ENCODE measurements at regions of chr2 and their contacts with region 1.

Region 1: DNA sequence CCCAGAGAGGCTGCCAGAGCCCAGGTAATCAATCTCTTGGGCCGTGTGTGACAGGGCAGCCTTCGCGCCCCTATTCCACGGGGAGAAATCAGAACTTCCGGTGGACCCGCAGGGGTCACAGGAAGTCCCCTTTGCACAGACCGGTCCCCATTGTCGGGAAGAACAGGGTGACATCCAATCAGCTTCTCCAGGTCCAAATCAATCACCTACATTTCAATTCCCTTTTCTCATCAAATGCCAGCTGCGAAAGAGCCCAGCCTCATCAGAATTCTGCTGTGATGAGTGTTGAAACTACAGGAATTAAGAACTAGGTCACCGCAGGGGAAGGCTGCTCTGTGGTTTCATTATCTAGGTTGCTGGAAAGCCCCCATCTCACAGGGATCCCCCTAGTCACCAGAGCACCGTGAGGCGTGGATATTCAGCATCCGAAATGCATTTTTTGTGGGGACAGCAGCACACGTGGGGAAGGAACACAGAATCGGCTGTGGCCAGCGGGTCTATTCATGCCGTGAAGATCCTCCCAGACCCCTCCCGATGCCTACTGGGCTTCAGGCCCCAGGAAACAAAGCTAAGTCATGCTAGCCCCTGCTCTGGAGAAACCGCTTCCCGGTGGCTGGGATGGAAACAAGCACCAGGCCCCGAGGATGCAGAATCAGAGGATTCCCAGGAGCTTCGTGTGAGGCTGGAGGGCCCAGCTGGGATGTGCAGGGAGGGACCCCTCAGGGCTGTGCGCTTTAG is 193.7 kb upstream of the ID2 start:
- DNase-seq: peak; percentile 84
- H3K4me3 Mint-ChIP-seq: peak overlapping the region; percentile 68
- H3K27ac Mint-ChIP-seq: peak overlapping the region; percentile 80
- H3K4me1 Mint-ChIP-seq: peaks cover 48% of the 10 kb centered on the region
- H3K27me3 Mint-ChIP-seq: no peaks in the 10 kb centered on the region

Region 2: DNA sequence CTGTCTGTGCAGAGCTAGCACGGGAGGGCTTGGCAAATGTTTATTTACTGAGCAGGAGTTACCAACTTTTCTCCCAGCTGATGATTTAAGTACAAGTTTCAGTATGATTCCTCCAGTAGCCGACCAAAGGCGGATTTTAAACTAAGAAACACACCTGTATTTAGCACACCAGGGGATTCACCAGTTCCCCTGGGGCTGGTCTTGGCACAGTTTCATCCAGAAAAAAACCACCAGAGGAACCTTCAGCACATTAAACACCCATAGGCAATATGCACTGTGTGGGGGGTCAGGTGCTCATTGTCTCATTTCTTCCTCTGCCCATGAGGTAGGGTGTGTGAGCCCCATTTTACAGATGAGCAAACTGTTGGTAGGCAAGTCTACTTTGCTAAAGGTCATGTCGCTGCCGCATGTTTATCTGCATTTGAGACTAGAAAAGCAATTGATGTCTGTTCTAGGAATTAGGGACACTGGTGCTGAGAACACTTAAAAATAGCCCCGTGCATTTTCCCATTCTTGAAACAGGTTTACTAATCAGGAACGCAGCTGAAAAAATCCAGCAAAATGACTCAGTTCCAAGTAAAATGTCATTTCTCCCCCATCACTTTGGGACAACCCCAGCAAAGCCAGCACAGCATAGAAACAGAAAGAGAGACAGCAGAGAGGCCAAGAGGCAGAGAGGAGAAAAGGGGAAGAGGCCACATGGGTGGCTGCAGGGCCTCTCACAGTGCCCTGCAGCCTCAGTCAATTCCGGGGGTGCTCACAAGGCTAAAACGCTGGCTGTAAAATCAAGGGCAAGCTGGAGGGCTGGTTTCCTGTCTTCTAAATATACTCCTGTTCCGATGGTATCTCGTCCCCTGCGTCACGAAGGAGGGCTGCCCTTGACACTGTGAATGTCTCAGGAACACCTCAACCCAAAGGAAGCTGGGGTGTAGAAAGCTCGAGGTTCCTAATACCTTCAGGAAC is 26.9 kb after region 1 on chr2:
- intact Hi-C with region 1: loop called (anchors 1 kb)
- DNase-seq: peak; percentile 87
- H3K4me3 Mint-ChIP-seq: peak overlapping the region; percentile 58
- H3K27ac Mint-ChIP-seq: peak overlapping the region; percentile 96
- H3K4me1 Mint-ChIP-seq: peaks cover 63% of the 10 kb centered on the region
- H3K27me3 Mint-ChIP-seq: no peaks in the 10 kb centered on the region

Region 3: DNA sequence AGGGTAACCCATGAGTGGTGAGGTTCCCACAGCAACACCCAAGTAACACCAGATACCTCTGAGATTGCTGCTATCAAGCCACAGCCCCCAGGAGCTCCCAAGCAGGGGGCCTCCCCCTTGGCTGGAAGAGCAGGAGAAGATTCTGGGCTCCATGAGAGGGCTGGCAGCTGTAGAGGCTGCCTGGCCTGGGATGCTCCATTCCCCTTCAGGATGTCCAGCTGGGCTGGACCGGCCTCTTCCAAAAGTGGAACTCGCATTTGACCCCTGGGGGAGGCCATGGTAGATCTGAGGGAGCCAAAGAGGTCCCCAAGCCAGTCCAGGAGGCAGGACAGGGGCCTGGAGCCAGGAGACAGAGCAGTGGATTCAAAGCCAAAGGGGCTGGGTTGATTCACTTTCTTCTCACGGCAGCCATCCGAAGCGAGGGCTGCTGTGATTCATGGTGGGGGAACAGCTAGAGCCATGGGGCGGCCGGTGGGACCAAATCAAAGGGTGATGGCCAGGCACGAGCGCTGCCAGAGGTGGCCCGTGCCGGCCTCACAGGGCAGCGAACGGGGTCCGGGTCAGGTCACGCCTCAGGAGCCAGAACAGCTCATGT is 98.4 kb after region 1 on chr2:
- intact Hi-C with region 1: loop called (anchors 5 kb)
- DNase-seq: no peak
- H3K4me3 Mint-ChIP-seq: peak overlapping the region; percentile 17
- H3K27ac Mint-ChIP-seq: peak overlapping the region; percentile 58
- H3K4me1 Mint-ChIP-seq: peaks cover 36% of the 10 kb centered on the region
- H3K27me3 Mint-ChIP-seq: peaks cover 15% of the 10 kb centered on the region

Measured in activated CD4-positive, alpha-beta T cell treated with anti-CD3 and anti-CD28 coated beads, Interleukin-2, amount 10 ng/mL, durations not matched to agents 24 days and 14 days (primary cell).